Activated CD8-positive, alpha-beta T cell treated with anti-CD3 and anti-CD28 coated beads, Interleukin-2, amount 10 ng/mL, durations not matched to agents 7 days and 5 days (primary cell): ENCODE measurements at regions of chr17 and their contacts with region 1.

Region 1: GRCh38 chr17:40474419-40475002 is 26.9 kb downstream of the TNS4 start:
- DNase-seq: no peak
- ATAC-seq: no peak
- H3K4me3 Mint-ChIP-seq: no peak overlapping the region
- H3K27ac Mint-ChIP-seq: peak overlapping the region; percentile 46
- H3K4me1 Mint-ChIP-seq: peaks cover 34% of the 10 kb centered on the region
- H3K27me3 Mint-ChIP-seq: peaks cover 5% of the 10 kb centered on the region

Region 2: GRCh38 chr17:40295488-40296436 is 178.7 kb before region 1 on chr17:
- CTCF ChIA-PET with region 1: no interaction called
- POLR2A ChIA-PET with region 1: no interaction called
- DNase-seq: no peak
- ATAC-seq: no peak
- H3K4me3 Mint-ChIP-seq: no peak overlapping the region
- H3K27ac Mint-ChIP-seq: peak overlapping the region; percentile 47
- H3K4me1 Mint-ChIP-seq: peaks cover 22% of the 10 kb centered on the region
- H3K27me3 Mint-ChIP-seq: no peaks in the 10 kb centered on the region

Region 3: GRCh38 chr17:40410082-40410481 is 64.4 kb before region 1 on chr17:
- CTCF ChIA-PET with region 1: interaction called, 10 read pairs
- POLR2A ChIA-PET with region 1: no interaction called
- DNase-seq: no peak
- ATAC-seq: no peak
- H3K4me3 Mint-ChIP-seq: no peak overlapping the region
- H3K27ac Mint-ChIP-seq: peak overlapping the region; percentile 27
- H3K4me1 Mint-ChIP-seq: peaks cover 41% of the 10 kb centered on the region
- H3K27me3 Mint-ChIP-seq: no peaks in the 10 kb centered on the region

Region 4: GRCh38 chr17:40490289-40490853 is 15.9 kb after region 1 on chr17:
- CTCF ChIA-PET with region 1: interaction called, 16 read pairs
- POLR2A ChIA-PET with region 1: interaction called, 5 read pairs
- DNase-seq: peak; percentile 34
- ATAC-seq: no peak
- H3K4me3 Mint-ChIP-seq: peak overlapping the region; percentile 22
- H3K27ac Mint-ChIP-seq: peak overlapping the region; percentile 78
- H3K4me1 Mint-ChIP-seq: peaks cover 57% of the 10 kb centered on the region
- H3K27me3 Mint-ChIP-seq: no peaks in the 10 kb centered on the region

Region 5: DNA sequence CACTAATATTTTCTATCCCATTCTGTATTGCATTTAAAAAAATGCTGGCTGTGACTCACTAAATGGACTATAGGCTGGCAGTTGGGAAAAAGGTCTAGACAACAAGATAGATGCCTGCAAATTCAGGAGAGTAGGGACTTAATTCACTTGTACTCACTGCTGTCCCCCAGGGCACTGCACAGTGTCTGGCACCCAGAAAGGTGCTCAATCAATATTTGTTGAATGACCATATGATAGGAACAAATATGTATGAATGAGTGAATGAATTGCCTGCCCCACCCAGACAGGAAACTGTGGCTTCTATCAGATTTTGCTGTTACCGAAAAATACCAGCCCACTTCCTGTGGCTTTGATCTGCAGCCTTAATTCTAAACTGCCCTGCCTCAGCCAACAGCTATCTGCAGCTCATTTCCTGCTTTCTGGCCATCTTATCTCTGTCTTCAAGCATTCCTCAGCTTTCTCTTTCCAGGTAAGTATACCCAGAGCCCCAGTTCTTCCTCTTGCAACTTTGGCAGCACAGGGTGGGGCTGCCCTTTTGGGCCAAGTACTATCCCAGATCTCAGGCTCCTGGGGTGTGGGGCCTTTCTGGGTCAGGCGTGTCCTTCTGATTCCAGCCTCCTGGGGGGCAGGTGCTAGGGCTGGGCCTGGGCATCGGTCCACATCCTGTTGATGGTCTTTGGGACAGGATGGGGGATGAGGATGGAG is 42.2 kb after region 1 on chr17:
- CTCF ChIA-PET with region 1: interaction called, 17 read pairs
- POLR2A ChIA-PET with region 1: interaction called, 29 read pairs
- DNase-seq: peak; percentile 92
- ATAC-seq: peak; percentile 84
- H3K4me3 Mint-ChIP-seq: peak overlapping the region; percentile 70
- H3K27ac Mint-ChIP-seq: peak overlapping the region; percentile 84
- H3K4me1 Mint-ChIP-seq: peaks cover 71% of the 10 kb centered on the region
- H3K27me3 Mint-ChIP-seq: no peaks in the 10 kb centered on the region

Region 6: DNA sequence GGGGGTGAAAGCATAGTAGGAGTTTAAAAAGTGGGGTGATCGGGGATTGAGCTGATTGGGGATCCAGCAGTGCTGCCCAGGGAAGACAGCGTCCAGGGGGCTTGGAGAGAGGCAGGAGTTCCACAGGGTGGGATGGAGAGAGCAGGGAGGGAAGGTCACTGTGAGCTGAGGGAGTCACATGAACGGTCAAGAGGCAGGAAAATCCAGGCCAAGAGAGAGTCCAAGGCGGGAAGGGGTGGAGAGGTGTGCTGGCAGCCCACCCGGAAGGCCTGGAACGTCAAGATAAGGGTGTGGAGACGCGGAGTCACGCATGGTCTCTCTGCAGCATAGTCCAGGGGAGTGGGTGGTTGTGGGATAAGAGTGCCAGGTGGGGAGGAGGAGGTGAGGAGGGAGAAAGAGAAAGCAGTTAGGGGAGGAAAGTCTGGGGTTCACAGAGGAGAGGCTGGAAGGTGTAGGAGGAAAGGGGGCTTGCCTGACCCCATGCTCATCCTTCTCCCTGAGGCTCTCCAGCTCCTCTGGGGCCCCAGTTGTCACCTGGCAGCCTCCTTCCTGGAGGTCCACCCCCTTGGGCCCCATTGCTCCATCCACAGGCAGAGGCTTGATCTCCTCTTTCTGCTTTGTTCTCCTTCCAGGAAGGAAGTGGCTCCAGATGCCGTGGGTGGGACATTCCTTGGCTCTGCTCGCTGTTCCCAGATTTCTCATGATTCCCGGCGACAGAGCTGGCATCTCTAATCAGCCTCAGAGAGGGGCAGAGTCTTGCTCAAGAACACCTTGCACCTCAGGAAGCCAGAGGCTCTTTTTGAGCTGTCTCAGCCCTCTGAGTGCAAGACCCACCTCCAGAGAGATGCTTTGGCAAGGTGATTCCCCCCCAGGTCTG is 62.0 kb after region 1 on chr17:
- CTCF ChIA-PET with region 1: interaction called, 82 read pairs
- POLR2A ChIA-PET with region 1: interaction called, 32 read pairs
- DNase-seq: no peak
- ATAC-seq: no peak
- H3K4me3 Mint-ChIP-seq: no peak overlapping the region
- H3K27ac Mint-ChIP-seq: peak overlapping the region; percentile 39
- H3K4me1 Mint-ChIP-seq: peaks cover 100% of the 10 kb centered on the region
- H3K27me3 Mint-ChIP-seq: no peaks in the 10 kb centered on the region